RWPE1 (cell line): ENCODE measurements at regions of chr1 and their contacts with region 1.

Region 1: DNA sequence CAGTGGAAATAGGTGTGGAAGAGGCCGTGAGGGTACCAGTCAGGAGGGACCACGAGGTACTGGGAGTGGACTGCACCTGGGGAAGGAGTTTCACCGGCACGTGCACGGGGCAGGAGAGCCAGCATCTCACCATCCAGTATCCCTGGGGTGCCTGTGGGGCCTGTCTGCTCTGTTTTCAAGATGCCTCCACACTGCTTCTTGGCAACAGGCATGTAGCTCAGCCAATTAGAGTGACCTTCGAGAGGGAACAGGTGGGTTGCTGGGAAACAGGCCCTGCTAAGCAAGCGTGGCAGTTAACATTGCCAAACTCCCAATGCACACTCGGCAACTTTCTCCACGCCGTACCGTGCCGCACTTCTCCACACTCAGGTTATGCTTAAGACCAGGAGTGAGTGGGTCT is 17.7 kb downstream of the KCNC4 start:
- DNase-seq: no peak
- H3K27ac ChIP-seq: no peak overlapping the region
- CTCF ChIP-seq: no peak

Region 2: GRCh38 chr1:110262846-110263631 is 35.3 kb after region 1 on chr1:
- CTCF ChIA-PET with region 1: no interaction called
- POLR2A ChIA-PET with region 1: no interaction called
- DNase-seq: no peak
- H3K27ac ChIP-seq: no peak overlapping the region
- CTCF ChIP-seq: no peak

Region 3: DNA sequence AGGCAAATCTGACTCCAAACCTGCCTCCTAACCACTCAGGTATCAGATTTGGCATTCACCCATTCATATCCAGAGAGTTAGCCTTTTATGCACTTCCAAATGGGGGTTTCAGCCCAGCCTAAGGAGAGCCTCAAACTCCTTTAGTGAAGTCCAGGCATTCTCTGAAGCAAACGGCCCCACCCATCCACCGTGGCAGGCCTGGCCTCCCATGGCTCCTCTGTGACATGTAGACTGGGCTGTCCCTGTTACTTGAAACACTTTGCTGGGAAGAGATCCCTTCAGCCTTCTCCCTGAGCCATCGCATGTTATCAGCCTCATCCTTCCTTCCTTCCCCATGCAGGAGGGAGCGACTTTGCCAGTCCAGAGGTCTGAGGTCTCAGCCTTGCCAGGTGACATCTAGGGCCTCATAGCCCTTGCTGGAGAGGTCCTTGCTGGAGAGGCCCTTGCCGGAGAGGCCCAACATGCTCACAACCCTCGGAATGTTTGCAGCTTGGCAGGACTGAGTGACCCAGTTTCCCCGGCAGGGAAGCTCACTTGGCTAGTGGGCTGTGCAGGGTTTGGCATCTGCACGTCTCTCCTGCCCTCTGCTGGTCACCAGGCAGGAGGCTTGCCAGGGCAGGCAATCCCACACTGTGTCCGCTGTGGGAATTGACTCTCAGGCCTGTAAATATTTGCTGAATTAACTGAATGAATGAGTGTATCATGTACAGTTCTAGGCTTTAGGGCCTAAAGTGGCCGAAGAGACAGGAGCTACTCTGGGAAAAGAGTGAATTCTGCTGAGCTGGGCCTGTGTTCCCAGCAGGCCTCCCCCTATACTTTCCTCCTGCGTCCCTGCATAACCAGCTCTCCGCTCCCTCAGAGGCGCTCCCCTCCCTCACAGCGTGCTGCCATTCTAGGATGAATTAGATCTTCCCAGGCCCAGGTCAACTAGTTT is 84.7 kb after region 1 on chr1:
- CTCF ChIA-PET with region 1: interaction called, 12 read pairs
- POLR2A ChIA-PET with region 1: no interaction called
- DNase-seq: peak; percentile 63
- H3K27ac ChIP-seq: no peak overlapping the region
- CTCF ChIP-seq: peak; percentile 80